ENCODE measurements at regions of chr21 and their contacts with region 1.

Region 1: DNA sequence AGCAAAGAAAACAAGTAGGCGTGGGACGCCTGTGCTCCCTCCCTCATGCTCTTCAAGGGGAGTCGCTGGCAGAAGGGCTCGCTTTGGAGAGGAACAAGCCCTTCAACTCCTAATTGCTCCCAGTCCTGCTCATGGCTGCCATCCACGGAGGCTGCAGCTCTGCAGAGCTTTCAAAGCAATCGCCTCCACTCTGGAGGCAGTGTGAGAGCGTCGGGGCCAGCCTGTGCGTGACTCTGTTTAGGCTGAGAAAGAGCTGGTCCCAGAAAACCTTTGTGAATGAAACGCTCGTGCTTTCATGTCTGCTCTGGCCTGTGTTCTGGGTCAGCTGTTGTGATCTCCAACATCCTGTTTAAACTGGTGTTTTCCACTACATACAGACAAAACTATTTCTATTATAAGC is 23.9 kb upstream of the RUNX1 start:
- DNase-seq: no peak
- H3K4me3 ChIP-seq: no peak overlapping the region
- H3K27ac ChIP-seq: no peak overlapping the region
- H3K4me1 ChIP-seq: peaks cover 9% of the 10 kb centered on the region
- H3K27me3 ChIP-seq: no peaks in the 10 kb centered on the region
- CTCF ChIP-seq: no peak

Region 2: GRCh38 chr21:34679051-34679450 is 393.9 kb before region 1 on chr21:
- CTCF ChIA-PET with region 1: no interaction called
- dilution Hi-C with region 1: no loop called
- in situ Hi-C with region 1: no loop called
- intact Hi-C with region 1: no loop called
- DNase-seq: no peak
- H3K4me3 ChIP-seq: no peak overlapping the region
- H3K27ac ChIP-seq: no peak overlapping the region
- H3K4me1 ChIP-seq: peaks cover 7% of the 10 kb centered on the region
- H3K27me3 ChIP-seq: no peaks in the 10 kb centered on the region
- CTCF ChIP-seq: no peak

Region 3: DNA sequence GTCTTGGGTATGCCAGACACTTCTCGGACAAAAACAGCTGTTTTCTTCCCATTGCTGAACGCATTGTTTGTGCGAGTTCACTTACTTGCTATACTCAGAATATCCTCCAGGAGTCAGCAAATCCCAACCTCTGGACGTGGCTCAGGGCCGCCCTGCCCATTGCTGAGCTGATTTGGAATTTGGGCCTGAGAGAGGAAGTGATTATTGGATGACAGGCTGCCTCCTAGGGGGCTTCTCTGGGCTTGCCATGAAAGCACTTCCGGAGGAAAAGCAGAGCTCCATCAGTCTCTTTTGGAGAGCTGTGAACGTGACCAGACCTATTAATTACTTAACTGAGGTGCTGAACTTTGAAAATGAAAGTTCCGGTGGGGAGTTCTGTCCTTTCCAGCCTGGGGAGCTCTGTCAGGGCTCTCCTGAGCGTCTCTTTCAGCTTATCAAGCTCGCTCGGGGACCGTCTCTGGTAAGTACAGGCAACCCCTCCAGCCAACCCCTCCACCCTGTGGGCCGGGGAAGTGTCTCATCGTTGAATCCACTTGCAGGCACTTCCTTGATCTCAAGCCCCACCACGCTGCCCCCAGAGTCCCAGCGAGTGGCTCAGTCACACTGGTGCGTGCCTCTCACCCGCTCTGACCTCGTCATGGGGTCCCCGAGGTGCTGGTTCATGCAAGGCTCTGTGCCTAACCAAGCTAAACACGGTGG is 327.3 kb before region 1 on chr21:
- CTCF ChIA-PET with region 1: no interaction called
- dilution Hi-C with region 1: no loop called
- in situ Hi-C with region 1: no loop called
- intact Hi-C with region 1: no loop called
- DNase-seq: peak; percentile 63
- H3K4me3 ChIP-seq: no peak overlapping the region
- H3K27ac ChIP-seq: no peak overlapping the region
- H3K4me1 ChIP-seq: peaks cover 31% of the 10 kb centered on the region
- H3K27me3 ChIP-seq: no peaks in the 10 kb centered on the region
- CTCF ChIP-seq: peak; percentile 84 to 96

Region 4: GRCh38 chr21:34986561-34987500 is 86.1 kb before region 1 on chr21:
- CTCF ChIA-PET with region 1: no interaction called
- dilution Hi-C with region 1: no loop called
- in situ Hi-C with region 1: no loop called
- intact Hi-C with region 1: no loop called
- DNase-seq: peak; percentile 95
- H3K4me3 ChIP-seq: no peak overlapping the region
- H3K27ac ChIP-seq: peak overlapping the region; percentile 64
- H3K4me1 ChIP-seq: peaks cover 41% of the 10 kb centered on the region
- H3K27me3 ChIP-seq: no peaks in the 10 kb centered on the region
- CTCF ChIP-seq: peak in 1 of 2 donors; percentile 3

Region 5: GRCh38 chr21:35019631-35020032 is 53.3 kb before region 1 on chr21:
- CTCF ChIA-PET with region 1: no interaction called
- dilution Hi-C with region 1: loop called (anchors 5 kb)
- in situ Hi-C with region 1: no loop called
- intact Hi-C with region 1: no loop called
- DNase-seq: no peak
- H3K4me3 ChIP-seq: no peak overlapping the region
- H3K27ac ChIP-seq: no peak overlapping the region
- H3K4me1 ChIP-seq: peaks cover 4% of the 10 kb centered on the region
- H3K27me3 ChIP-seq: no peaks in the 10 kb centered on the region
- CTCF ChIP-seq: no peak